ENCODE measurements at regions of chr6 and their contacts with region 1.

Region 1: DNA sequence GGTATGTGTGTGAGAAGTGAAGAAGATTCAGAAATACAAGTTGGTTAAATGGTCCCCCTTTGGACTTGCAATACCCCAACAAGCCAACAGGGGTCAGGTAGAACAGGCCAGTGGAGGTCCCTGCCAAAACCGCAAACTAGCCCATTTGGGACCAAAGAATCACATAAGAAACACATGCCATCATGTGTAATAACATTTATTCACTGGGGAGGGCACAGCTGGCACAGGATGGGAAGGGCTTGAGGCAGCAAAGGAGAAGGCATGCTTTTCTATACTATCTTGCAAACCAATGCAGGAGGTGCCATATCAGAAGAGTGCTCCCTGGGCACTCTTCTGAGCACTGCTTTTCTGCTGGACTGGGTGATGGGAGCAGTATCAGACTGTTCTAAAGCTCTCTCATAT is 116.1 kb upstream of the TRAF3IP2 start:
- DNase-seq: peak; percentile 44
- ATAC-seq: peak; percentile 22
- H3K4me3 ChIP-seq: no peak overlapping the region
- H3K27ac ChIP-seq: peak overlapping the region; percentile 45; the same call in 1 of the 2 replicates
- H3K4me1 ChIP-seq: peaks cover 9% of the 10 kb centered on the region
- H3K27me3 ChIP-seq: no peaks in the 10 kb centered on the region
- CTCF ChIP-seq: peak; percentile 53
- POLR2A ChIP-seq: no peak
- RAD21 ChIP-seq: peak; percentile 53

Region 2: DNA sequence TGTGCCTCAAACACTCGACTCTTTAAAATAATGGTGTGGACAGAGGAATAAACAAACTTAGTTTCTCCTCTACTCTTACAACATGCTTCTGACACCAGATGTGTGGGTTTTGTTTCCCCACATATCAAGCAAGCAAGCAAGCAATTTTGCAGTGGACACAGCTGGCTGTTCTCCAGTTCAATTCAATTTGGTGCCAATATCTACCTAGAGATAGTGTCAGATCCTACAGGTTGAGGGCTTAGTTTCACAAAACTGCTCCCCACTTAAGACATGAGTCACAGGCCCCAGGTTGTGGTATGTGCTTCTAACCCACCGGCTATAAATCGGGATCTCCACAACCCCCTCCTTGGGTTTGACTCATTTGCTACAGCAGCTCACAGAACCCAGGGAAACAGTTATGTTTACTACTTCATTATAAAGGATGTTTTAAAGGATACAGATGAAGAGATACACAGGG is 15.3 kb after region 1 on chr6:
- CTCF ChIA-PET with region 1: no interaction called
- POLR2A ChIA-PET with region 1: no interaction called
- dilution Hi-C with region 1: no loop called
- in situ Hi-C with region 1: no loop called
- intact Hi-C with region 1: no loop called
- DNase-seq: peak; percentile 70
- ATAC-seq: peak; percentile 36
- H3K4me3 ChIP-seq: no peak overlapping the region
- H3K27ac ChIP-seq: no peak overlapping the region
- H3K4me1 ChIP-seq: peaks cover 16% of the 10 kb centered on the region
- H3K27me3 ChIP-seq: no peaks in the 10 kb centered on the region
- CTCF ChIP-seq: no peak
- POLR2A ChIP-seq: no peak
- RAD21 ChIP-seq: no peak

Region 3: GRCh38 chr6:111804627-111805235 is 83.0 kb after region 1 on chr6:
- CTCF ChIA-PET with region 1: no interaction called
- POLR2A ChIA-PET with region 1: no interaction called
- dilution Hi-C with region 1: no loop called
- in situ Hi-C with region 1: no loop called
- intact Hi-C with region 1: loop called (anchors 10 kb)
- DNase-seq: peak; percentile 74
- ATAC-seq: no peak
- H3K4me3 ChIP-seq: no peak overlapping the region
- H3K27ac ChIP-seq: no peak overlapping the region
- H3K4me1 ChIP-seq: peaks cover 33% of the 10 kb centered on the region
- H3K27me3 ChIP-seq: no peaks in the 10 kb centered on the region
- CTCF ChIP-seq: peak; percentile 37
- POLR2A ChIP-seq: no peak
- RAD21 ChIP-seq: peak; percentile 45